A549 (cell line): ENCODE measurements at regions of chr3 and their contacts with region 1.

Region 1: DNA sequence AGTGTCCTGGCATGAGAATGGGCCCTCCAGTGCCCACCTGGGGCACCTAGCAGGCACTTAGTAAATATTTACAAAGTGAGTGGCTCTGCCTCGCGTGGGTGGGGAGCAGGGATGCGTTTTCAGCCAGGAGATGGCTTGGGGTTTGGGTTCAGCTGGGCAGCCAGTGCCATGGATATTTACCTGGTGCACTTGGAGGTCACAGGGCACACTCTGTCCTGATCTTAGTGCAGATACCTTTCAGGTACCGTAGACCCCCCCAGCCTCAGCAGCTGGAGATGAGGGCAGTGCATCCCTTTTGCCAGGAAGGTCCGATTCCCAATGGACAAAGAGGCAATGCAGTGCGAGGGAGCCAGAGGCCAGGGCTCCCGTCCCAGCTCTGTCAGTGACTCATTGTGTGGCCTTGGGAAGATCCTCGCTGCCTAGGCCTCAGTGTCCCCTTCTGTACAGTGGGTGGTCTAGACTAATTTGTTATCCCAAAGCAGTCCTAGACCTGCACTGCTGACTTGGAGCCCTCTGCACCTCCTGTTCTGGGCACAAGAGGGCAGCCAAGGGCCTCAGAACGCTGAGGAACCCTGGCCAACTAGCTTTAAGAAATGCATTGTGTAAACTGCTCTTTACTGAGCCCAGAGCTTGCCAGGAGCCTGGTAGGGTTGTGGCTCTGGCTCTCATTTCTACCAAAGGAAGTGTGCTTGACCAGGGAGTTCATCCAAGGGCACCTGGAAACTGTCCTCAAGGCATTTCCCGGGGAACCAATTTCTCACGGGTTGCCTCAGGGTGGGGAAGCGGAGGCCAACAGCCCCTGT is 16.0 kb downstream of the HDAC11 start:
- DNase-seq: peak; percentile 59 to 78
- ATAC-seq: peak; percentile 74 to 88
- H3K4me3 ChIP-seq: no peak overlapping the region
- H3K27ac ChIP-seq: peak overlapping the region in 1 of 2 experiments; percentile 41; a peak in 2 of 6 replicates
- H3K4me1 ChIP-seq: no peaks in the 10 kb centered on the region
- CTCF ChIP-seq: peak; percentile 86
- EP300 ChIP-seq: no peak
- POLR2A ChIP-seq: no peak
- RAD21 ChIP-seq: peak; percentile 92 to 98

Region 2: DNA sequence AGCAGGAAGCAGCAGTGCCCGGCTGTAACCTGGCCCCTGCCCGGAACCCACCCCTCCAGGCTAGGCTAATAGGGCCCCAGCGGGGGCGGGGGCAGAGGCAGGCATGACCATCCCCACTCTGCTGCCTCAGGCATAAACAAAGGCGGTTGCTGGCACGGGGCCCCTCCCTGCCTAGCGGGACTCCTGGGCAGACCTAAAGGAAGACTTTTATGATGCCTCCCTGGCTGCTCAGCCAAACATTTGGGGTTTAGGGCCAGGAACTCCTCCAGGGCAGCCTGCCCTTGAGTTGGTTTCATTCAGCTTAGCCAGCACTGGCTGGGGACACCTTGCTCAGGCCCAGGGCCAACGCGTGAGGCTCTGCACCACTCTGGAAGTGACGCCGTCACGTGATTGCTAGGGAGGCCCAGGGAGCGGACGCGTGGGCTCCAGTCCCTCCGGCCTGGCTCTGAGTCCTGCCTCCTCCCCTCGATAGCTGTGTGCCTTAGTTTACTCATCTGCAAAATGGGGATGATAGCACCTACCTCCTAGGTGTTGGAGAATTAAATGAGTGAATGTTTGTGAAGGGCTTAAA is 11.7 kb after region 1 on chr3:
- CTCF ChIA-PET with region 1: interaction called, 98 read pairs
- POLR2A ChIA-PET with region 1: no interaction called
- DNase-seq: no peak
- ATAC-seq: no peak
- H3K4me3 ChIP-seq: no peak overlapping the region
- H3K27ac ChIP-seq: 0 out of 6 replicates have a peak overlapping the region, but pooled peaks of 1 of the 2 experiments have one; percentile 21
- H3K4me1 ChIP-seq: peaks cover 6% of the 10 kb centered on the region; the same call in 1 of the 3 replicates
- CTCF ChIP-seq: no peak
- EP300 ChIP-seq: no peak
- POLR2A ChIP-seq: no peak
- RAD21 ChIP-seq: no peak

Region 3: DNA sequence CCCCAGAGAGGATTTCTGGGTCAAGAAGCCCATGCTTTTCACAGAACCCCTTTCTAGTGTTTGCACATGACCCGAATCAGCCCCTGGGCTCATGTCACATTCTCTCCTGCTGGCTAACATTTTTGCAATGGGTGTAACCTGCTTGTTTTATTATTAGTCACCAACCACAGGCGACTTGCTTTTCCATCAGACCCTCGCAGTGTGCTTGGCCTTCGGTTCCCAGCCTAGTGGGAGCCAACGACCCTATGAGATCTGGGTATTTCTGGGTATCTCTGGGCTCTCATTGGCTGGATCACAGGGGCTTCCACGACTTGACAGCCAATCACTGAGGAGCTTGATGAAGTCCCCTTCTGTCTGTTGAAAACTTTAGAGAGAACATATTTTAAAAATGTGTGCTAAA is 41.8 kb after region 1 on chr3:
- CTCF ChIA-PET with region 1: interaction called, 28 read pairs
- POLR2A ChIA-PET with region 1: no interaction called
- DNase-seq: peak; percentile 72 to 84
- ATAC-seq: peak; percentile 73 to 87
- H3K4me3 ChIP-seq: no peak overlapping the region
- H3K27ac ChIP-seq: peak overlapping the region; percentile 63 to 83
- H3K4me1 ChIP-seq: peaks cover 45% of the 10 kb centered on the region
- CTCF ChIP-seq: no peak
- EP300 ChIP-seq: 0 out of 5 replicates have a peak, but pooled peaks of 1 of the 2 experiments have one; percentile 20
- POLR2A ChIP-seq: no peak
- RAD21 ChIP-seq: no peak

Region 4: GRCh38 chr3:13574798-13575451 is 78.8 kb after region 1 on chr3:
- CTCF ChIA-PET with region 1: interaction called, 17 read pairs
- POLR2A ChIA-PET with region 1: no interaction called
- DNase-seq: no peak
- ATAC-seq: no peak
- H3K4me3 ChIP-seq: no peak overlapping the region
- H3K27ac ChIP-seq: no peak overlapping the region
- H3K4me1 ChIP-seq: no peaks in the 10 kb centered on the region
- CTCF ChIP-seq: no peak
- EP300 ChIP-seq: no peak
- POLR2A ChIP-seq: no peak
- RAD21 ChIP-seq: no peak

Region 5: DNA sequence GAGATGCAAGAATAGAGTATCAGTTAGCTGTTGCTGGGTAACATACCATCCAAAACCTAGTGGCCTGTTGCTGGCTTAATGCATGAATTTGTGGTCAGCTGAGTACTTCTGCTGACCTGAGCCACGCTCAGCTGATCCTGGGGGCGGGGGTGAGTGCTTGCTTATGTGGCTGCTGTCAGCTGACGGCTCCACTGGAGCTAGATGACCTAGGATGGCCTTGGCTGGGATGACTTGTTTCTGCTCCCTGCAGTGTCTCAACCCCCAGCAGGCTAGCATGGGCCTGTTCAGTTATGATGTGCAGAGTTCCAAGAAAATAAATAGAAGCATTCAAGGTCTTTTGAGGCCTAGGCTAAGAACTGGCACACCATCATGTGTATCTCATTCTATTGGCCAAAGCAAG is 116.7 kb after region 1 on chr3:
- CTCF ChIA-PET with region 1: interaction called, 14 read pairs
- POLR2A ChIA-PET with region 1: no interaction called
- DNase-seq: no peak
- ATAC-seq: no peak
- H3K4me3 ChIP-seq: no peak overlapping the region
- H3K27ac ChIP-seq: no peak overlapping the region
- H3K4me1 ChIP-seq: no peaks in the 10 kb centered on the region
- CTCF ChIP-seq: no peak
- EP300 ChIP-seq: no peak
- POLR2A ChIP-seq: no peak
- RAD21 ChIP-seq: no peak

Region 6: GRCh38 chr3:13884851-13885703 is 389.0 kb after region 1 on chr3:
- CTCF ChIA-PET with region 1: interaction called, 11 read pairs
- POLR2A ChIA-PET with region 1: interaction called, 3 read pairs
- DNase-seq: peak in 1 of 2 experiments; percentile 53
- ATAC-seq: peak in 1 of 2 experiments; percentile 74; a peak in 3 of 6 replicates
- H3K4me3 ChIP-seq: no peak overlapping the region
- H3K27ac ChIP-seq: no peak overlapping the region
- H3K4me1 ChIP-seq: peaks cover 8% of the 10 kb centered on the region
- CTCF ChIP-seq: peak; percentile 66
- EP300 ChIP-seq: no peak
- POLR2A ChIP-seq: no peak
- RAD21 ChIP-seq: peak; percentile 58 to 81